Mammary epithelial cell (primary cell): ENCODE measurements at regions of chr10 and their contacts with region 1.

Region 1: GRCh38 chr10:121598207-121598862 is at the start of gene FGFR2:
- DNase-seq: peak; percentile 85
- H3K4me3 ChIP-seq: peak within 1 kb of the TSS; percentile 79 to 93 (median 83)
- H3K27ac ChIP-seq: peak within 1 kb of the TSS; percentile 87
- H3K4me1 ChIP-seq: peaks cover 22% of the 10 kb centered on the region
- H3K27me3 ChIP-seq: no peaks in the 10 kb centered on the region
- CTCF ChIP-seq: no peak
- total RNA-seq, gene FGFR2: 22.0 to 86.9 TPM

Region 2: GRCh38 chr10:121088524-121088923 is 509.8 kb before region 1 on chr10:
- CTCF ChIA-PET with region 1: no interaction called
- dilution Hi-C with region 1: no loop called
- in situ Hi-C with region 1: loop called in 1 of 2 experiments (anchors 25 kb)
- intact Hi-C with region 1: loop called (anchors 1 kb)
- DNase-seq: peak; percentile 68
- H3K4me3 ChIP-seq: no peak overlapping the region
- H3K27ac ChIP-seq: no peak overlapping the region
- H3K4me1 ChIP-seq: peaks cover 12% of the 10 kb centered on the region
- H3K27me3 ChIP-seq: no peaks in the 10 kb centered on the region
- CTCF ChIP-seq: peak; percentile 67 to 75

Region 3: DNA sequence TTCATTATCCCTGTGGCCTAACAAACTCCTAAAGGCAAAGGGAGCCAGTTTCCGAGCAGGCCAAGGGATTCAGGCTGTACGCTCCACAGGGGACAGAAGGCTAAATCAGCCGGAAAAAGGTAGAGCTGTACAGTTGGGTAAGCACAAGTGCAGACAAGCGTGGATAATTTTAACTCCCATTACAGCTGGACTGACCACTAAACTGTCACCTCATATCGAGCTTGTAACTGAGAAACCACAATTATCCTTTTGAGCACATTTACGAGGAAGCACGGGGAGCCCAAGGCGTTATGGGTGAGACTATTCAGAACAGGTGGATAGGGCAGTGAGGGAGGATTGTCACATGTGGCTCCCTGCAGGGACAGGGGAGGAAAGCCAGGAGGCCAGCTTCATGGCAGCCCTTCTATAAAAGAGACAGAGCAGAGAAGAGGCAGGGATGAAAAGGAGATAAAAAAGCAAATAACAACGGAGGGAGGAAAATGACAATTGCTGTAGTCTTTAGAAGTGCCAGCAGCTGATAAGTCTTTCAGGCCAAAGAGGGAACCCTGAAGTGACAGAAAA is 288.1 kb before region 1 on chr10:
- CTCF ChIA-PET with region 1: no interaction called
- dilution Hi-C with region 1: no loop called
- in situ Hi-C with region 1: no loop called
- intact Hi-C with region 1: loop called (anchors 1 kb)
- DNase-seq: peak; percentile 65
- H3K4me3 ChIP-seq: no peak overlapping the region
- H3K27ac ChIP-seq: peak overlapping the region; percentile 81
- H3K4me1 ChIP-seq: peaks cover 64% of the 10 kb centered on the region
- H3K27me3 ChIP-seq: no peaks in the 10 kb centered on the region
- CTCF ChIP-seq: no peak

Region 4: DNA sequence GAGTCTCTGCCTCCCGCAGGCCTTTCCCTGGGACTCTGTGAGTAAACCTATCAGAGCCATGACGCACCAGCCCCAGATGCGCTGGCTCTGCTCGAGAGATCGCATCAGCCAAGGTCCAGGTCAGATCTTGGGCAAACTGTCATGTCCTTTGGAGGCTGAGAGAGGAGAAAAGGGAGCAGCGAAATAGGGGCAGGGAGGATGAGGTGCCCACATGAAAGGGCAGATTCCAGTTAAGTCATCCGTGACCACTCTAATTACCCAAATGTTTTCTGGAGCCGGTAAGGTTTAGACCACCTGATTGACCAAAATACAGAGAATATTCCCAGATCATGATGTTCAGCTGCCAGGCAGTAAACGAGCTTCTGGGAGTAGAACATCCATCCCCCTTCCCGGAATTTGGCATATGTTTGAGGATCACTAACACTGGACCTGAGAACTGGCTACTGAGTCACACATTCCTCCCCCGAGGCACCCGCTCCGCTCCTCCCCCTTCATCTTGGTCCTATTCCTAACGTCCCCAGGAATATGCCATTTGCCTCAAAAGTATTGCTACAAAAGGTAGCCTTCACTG is 88.0 kb before region 1 on chr10:
- CTCF ChIA-PET with region 1: no interaction called
- dilution Hi-C with region 1: no loop called
- in situ Hi-C with region 1: no loop called
- intact Hi-C with region 1: loop called (anchors 5 kb)
- DNase-seq: no peak
- H3K4me3 ChIP-seq: no peak overlapping the region
- H3K27ac ChIP-seq: no peak overlapping the region
- H3K4me1 ChIP-seq: peaks cover 25% of the 10 kb centered on the region
- H3K27me3 ChIP-seq: no peaks in the 10 kb centered on the region
- CTCF ChIP-seq: no peak

Region 5: GRCh38 chr10:121540732-121541395 is 57.5 kb before region 1 on chr10:
- CTCF ChIA-PET with region 1: no interaction called
- dilution Hi-C with region 1: no loop called
- in situ Hi-C with region 1: no loop called
- intact Hi-C with region 1: no loop called
- DNase-seq: no peak
- H3K4me3 ChIP-seq: no peak overlapping the region
- H3K27ac ChIP-seq: no peak overlapping the region
- H3K4me1 ChIP-seq: no peaks in the 10 kb centered on the region
- H3K27me3 ChIP-seq: no peaks in the 10 kb centered on the region
- CTCF ChIP-seq: no peak

Region 6: GRCh38 chr10:121553511-121554264 is 44.6 kb before region 1 on chr10:
- CTCF ChIA-PET with region 1: no interaction called
- dilution Hi-C with region 1: no loop called
- in situ Hi-C with region 1: no loop called
- intact Hi-C with region 1: loop called (anchors 1 kb)
- DNase-seq: peak; percentile 77
- H3K4me3 ChIP-seq: no peak overlapping the region
- H3K27ac ChIP-seq: peak overlapping the region; percentile 34
- H3K4me1 ChIP-seq: peaks cover 19% of the 10 kb centered on the region
- H3K27me3 ChIP-seq: no peaks in the 10 kb centered on the region
- CTCF ChIP-seq: no peak

Region 7: DNA sequence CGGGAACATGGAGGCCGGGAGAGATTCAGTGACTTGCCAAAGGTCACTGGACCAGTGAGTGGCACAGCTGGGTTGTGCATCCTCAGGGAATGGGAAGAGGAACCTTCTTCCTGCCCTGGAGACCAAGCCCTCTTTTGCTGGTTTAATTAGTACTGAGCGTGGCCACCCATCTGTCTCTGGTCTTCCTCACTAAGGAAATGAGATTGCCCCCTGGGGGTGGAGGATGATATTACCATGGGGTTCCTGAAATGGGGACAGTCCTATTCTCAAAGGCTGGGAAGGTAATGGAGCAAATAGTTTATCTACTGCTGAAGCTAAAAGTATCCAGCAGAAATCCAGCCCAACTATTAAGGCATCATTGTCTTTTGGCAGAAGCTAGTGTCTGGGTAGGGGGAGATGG is 98.5 kb after region 1 on chr10:
- CTCF ChIA-PET with region 1: no interaction called
- dilution Hi-C with region 1: no loop called
- in situ Hi-C with region 1: no loop called
- intact Hi-C with region 1: no loop called
- DNase-seq: no peak
- H3K4me3 ChIP-seq: no peak overlapping the region
- H3K27ac ChIP-seq: no peak overlapping the region
- H3K4me1 ChIP-seq: peaks cover 23% of the 10 kb centered on the region
- H3K27me3 ChIP-seq: no peaks in the 10 kb centered on the region
- CTCF ChIP-seq: peak; percentile 31 to 48

Region 8: DNA sequence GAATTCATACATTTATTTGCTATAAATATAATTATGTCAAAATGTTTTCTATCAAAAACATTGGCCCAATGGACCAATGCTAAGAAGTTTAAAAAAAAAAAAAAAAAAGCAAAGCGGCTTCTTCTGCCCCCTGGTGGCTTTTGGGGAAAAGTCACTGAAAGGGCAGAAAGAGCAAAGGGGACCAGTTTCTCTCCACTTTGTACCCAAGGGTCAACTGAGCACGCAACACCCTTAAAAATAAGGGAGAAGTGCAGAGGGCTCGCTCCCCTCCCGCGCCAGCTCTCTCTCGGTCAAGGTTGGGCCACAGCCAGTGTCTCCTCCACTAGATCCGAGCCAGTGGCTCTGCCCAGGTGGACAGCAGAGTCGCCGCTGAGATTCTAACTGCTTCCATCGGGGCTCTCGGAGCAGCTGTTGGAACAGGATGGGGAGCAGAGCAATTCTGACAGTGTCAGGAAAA is 136.3 kb after region 1 on chr10:
- CTCF ChIA-PET with region 1: no interaction called
- dilution Hi-C with region 1: no loop called
- in situ Hi-C with region 1: no loop called
- intact Hi-C with region 1: loop called (anchors 5 kb)
- DNase-seq: peak; percentile 10
- H3K4me3 ChIP-seq: no peak overlapping the region
- H3K27ac ChIP-seq: no peak overlapping the region
- H3K4me1 ChIP-seq: no peaks in the 10 kb centered on the region
- H3K27me3 ChIP-seq: no peaks in the 10 kb centered on the region
- CTCF ChIP-seq: peak; percentile 58 to 75